MCF 10A (cell line): ENCODE measurements at regions of chr5 and their contacts with region 1.

Region 1: GRCh38 chr5:81787474-81788242 is 36.8 kb upstream of the SSBP2 start:
- DNase-seq: peak; percentile 93
- H3K4me3 Mint-ChIP-seq: peak overlapping the region; percentile 45
- H3K27ac Mint-ChIP-seq: peak overlapping the region; percentile 92
- H3K4me1 Mint-ChIP-seq: peaks cover 25% of the 10 kb centered on the region
- H3K27me3 Mint-ChIP-seq: no peaks in the 10 kb centered on the region
- CTCF ChIP-seq: no peak

Region 2: DNA sequence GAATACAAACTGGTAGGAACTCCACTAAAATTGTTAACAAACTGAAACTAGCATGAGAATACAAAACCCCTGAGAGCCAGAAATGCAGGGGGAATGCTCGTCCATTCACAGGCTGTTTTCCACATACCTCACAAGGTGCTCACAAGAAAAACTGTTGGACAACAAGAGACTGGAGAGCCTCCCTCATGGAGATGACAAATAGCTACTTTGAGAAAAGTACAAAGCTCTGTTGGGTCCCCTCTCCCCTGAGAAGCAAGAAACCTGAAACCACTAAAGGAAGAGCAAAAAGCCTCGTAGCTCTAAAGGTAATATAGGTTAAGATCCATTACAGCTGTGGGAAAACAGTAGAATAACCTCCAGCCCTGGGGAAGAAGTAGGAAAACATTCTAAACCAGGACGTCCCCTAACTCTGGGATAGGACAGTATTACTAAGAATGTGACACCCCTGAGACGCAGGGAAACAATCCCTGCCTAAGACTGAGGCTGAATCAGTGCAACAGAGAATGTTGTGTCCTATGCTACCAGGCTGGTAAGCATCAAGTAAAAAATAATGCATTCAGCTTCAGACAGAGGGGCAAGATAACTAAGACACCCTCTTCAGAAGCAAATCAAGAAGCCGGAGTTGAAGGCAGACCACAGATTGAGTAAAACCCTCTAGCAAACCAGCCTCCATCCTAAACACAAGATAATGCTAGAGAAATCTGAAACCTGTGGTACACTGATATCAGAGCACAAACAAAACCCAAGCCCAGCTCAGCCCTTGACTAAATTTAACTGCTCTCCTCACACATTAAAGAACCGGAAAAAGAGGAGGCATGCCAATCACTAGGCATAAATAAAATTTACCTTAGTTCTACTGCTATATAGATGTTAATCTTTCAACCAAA is 196.9 kb before region 1 on chr5:
- CTCF ChIA-PET with region 1: no interaction called
- POLR2A ChIA-PET with region 1: no interaction called
- intact Hi-C with region 1: no loop called
- DNase-seq: no peak
- H3K4me3 Mint-ChIP-seq: no peak overlapping the region
- H3K27ac Mint-ChIP-seq: no peak overlapping the region
- H3K4me1 Mint-ChIP-seq: no peaks in the 10 kb centered on the region
- H3K27me3 Mint-ChIP-seq: no peaks in the 10 kb centered on the region
- CTCF ChIP-seq: no peak

Region 3: DNA sequence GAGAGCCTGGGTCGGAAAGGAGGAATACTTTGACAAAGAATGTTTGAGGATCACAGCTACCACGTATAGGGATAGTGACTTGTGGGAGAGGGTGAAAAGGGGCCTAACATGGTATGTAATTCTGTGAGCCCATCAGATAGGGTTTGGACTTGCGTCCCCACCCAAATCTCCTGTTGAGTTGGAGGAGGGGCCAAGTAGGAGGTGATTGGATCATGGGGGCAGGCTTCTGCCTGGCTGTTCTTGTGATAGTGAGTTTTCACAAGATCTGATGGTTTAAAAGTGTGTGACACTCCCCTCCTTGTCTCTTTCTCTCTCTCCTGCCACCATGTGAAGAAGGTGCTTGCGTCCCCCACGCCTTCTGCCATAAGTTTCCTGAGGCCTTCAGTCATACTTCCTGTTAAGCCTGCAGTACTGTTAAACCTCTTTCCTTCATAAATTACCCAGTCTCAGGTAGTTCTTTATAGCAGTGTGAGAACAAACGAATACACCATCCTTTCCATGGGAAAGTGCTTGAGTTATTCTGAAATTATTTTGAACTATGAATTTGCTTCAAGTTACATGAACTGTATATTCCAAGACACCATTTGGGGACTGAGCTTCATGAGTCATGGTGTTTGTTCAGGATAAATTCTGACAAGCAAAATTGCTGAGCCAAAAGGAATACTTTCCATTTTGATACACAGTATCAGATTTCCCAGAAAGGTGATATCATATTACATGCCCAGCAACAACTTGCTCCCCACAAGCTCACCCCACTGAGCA is 32.1 kb after region 1 on chr5:
- CTCF ChIA-PET with region 1: interaction called, 5 read pairs
- POLR2A ChIA-PET with region 1: interaction called, 21 read pairs
- intact Hi-C with region 1: no loop called
- DNase-seq: peak; percentile 62
- H3K4me3 Mint-ChIP-seq: no peak overlapping the region
- H3K27ac Mint-ChIP-seq: peak overlapping the region; percentile 78
- H3K4me1 Mint-ChIP-seq: peaks cover 16% of the 10 kb centered on the region
- H3K27me3 Mint-ChIP-seq: no peaks in the 10 kb centered on the region
- CTCF ChIP-seq: no peak

Region 4: GRCh38 chr5:81825237-81825636 is 37.6 kb after region 1 on chr5:
- CTCF ChIA-PET with region 1: interaction called, 5 read pairs
- POLR2A ChIA-PET with region 1: interaction called, 21 read pairs
- intact Hi-C with region 1: no loop called
- DNase-seq: peak; percentile 92
- H3K4me3 Mint-ChIP-seq: peak overlapping the region; percentile 19
- H3K27ac Mint-ChIP-seq: peak overlapping the region; percentile 69
- H3K4me1 Mint-ChIP-seq: peaks cover 17% of the 10 kb centered on the region
- H3K27me3 Mint-ChIP-seq: no peaks in the 10 kb centered on the region
- CTCF ChIP-seq: no peak

Region 5: GRCh38 chr5:82031220-82032119 is 243.8 kb after region 1 on chr5:
- CTCF ChIA-PET with region 1: no interaction called
- POLR2A ChIA-PET with region 1: no interaction called
- intact Hi-C with region 1: no loop called
- DNase-seq: peak; percentile 24
- H3K4me3 Mint-ChIP-seq: no peak overlapping the region
- H3K27ac Mint-ChIP-seq: peak overlapping the region; percentile 57
- H3K4me1 Mint-ChIP-seq: peaks cover 16% of the 10 kb centered on the region
- H3K27me3 Mint-ChIP-seq: no peaks in the 10 kb centered on the region
- CTCF ChIP-seq: no peak